A673 (cell line): ENCODE measurements at regions of chr14 and their contacts with region 1.

Region 1: DNA sequence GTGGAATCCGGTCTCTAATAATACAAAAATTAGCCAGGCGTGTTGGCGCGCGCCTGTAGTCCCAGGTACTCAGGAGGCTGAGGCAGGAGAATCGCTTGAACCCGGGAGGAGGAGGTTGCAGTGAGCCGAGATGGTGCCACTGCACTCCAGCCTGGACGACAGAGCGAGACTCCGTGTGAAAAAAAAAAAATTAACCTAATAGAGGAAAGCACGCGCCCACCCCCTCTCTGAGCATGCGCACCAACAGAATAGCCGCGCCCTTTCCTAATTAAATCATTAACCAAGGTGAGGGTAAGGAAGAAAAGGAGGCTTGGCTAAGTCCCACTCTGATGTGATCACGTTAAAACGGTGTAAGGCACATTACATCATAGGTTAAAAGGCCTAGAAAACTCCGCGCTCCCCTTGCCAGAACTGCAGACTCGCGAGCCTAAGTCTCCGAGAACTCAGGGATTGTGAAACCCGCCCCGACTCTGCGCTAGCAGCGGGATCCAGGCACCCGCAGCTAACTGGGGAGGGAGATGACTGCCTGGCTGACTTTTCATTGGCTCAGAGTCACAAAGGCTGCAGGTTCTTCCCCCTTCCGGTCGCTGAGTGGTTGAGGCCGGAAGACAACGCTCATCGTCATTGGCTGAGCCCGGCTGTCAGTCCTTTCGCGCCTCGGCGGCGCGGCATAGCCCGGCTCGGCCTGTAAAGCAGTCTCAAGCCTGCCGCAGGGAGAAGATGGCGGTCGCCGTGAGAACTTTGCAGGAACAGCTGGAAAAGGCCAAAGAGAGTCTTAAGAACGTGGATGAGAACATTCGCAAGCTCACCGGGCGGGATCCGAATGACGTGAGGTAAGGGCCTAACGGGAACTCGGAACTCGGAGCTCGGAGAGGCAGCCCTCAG is at the start of gene PNN:
- DNase-seq: peak; percentile 100
- H3K4me3 ChIP-seq: peak within 1 kb of the TSS; percentile 89
- H3K27ac ChIP-seq: peak within 1 kb of the TSS; percentile 96
- H3K4me1 ChIP-seq: peaks cover 15% of the 10 kb centered on the region
- H3K27me3 ChIP-seq: no peaks in the 10 kb centered on the region
- CTCF ChIP-seq: no peak
- total RNA-seq, gene PNN: 136 and 146 TPM in 2 replicates

Region 2: GRCh38 chr14:38971255-38971921 is 203.4 kb before region 1 on chr14:
- CTCF ChIA-PET with region 1: no interaction called
- POLR2A ChIA-PET with region 1: no interaction called
- intact Hi-C with region 1: no loop called
- DNase-seq: no peak
- H3K4me3 ChIP-seq: no peak overlapping the region
- H3K27ac ChIP-seq: no peak overlapping the region
- H3K4me1 ChIP-seq: no peaks in the 10 kb centered on the region
- H3K27me3 ChIP-seq: no peaks in the 10 kb centered on the region
- CTCF ChIP-seq: no peak

Region 3: DNA sequence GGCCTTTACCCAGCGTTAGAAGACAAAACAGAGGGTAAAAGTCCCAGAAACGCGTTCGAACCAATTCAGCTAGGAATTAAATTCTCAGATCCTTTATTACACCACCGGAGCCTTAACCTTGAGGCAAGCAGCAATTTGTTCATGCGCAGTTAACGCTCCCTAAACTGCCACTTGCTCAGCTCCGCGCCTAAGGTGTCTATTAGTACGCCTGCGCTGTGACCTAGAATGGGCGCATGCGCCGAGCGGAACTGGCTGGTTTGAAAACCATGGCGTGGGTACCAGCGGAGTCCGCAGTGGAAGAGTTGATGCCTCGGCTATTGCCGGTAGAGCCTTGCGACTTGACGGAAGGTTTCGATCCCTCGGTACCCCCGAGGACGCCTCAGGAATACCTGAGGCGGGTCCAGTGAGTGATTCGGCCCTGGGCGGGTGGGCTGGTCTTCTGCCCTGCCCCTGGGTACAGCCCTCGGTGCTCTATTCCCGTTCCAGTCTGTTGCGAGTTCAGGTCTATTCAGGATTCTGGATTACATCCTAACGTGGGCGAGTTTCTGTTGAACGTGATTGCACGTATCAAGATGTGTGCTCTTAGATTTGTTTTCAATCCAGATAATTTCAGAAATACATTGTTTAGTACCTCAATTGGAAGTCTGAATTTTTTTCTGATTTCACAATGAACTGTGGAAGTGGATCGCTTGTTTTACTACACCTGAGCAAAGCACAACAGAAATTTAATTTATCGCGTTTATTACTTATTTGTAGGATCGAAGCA is 60.5 kb before region 1 on chr14 and contains the start of gene GEMIN2:
- CTCF ChIA-PET with region 1: no interaction called
- POLR2A ChIA-PET with region 1: interaction called, 4 read pairs
- intact Hi-C with region 1: loop called (anchors 5 kb)
- DNase-seq: peak; percentile 97
- H3K4me3 ChIP-seq: peak within 1 kb of the TSS; percentile 65
- H3K27ac ChIP-seq: peak within 1 kb of the TSS; percentile 39
- H3K4me1 ChIP-seq: peaks cover 3% of the 10 kb centered on the region
- H3K27me3 ChIP-seq: no peaks in the 10 kb centered on the region
- CTCF ChIP-seq: no peak
- total RNA-seq, gene GEMIN2: 27.7 and 32.7 TPM in 2 replicates

Region 4: GRCh38 chr14:39266871-39267591 is 92.2 kb after region 1 on chr14:
- CTCF ChIA-PET with region 1: no interaction called
- POLR2A ChIA-PET with region 1: interaction called, 20 read pairs
- intact Hi-C with region 1: loop called (anchors 2 kb)
- DNase-seq: peak; percentile 89
- H3K4me3 ChIP-seq: peak overlapping the region; percentile 74
- H3K27ac ChIP-seq: peak overlapping the region; percentile 99
- H3K4me1 ChIP-seq: peaks cover 18% of the 10 kb centered on the region
- H3K27me3 ChIP-seq: no peaks in the 10 kb centered on the region
- CTCF ChIP-seq: no peak